ENCODE measurements at regions of chr12 and their contacts with region 1.

Region 1: GRCh38 chr12:57452937-57453509 is 2.1 kb upstream of the INHBE start:
- DNase-seq: peak; percentile 69
- H3K4me3 ChIP-seq: no peak overlapping the region
- H3K27ac ChIP-seq: no peak overlapping the region
- H3K4me1 ChIP-seq: no peaks in the 10 kb centered on the region
- H3K27me3 ChIP-seq: no peaks in the 10 kb centered on the region
- CTCF ChIP-seq: peak; percentile 73 to 94 (median 90)
- POLR2A ChIP-seq: no peak

Region 2: GRCh38 chr12:57166971-57167371 is 286.1 kb before region 1 on chr12:
- intact Hi-C with region 1: no loop called
- DNase-seq: no peak
- H3K4me3 ChIP-seq: no peak overlapping the region
- H3K27ac ChIP-seq: no peak overlapping the region
- H3K4me1 ChIP-seq: no peaks in the 10 kb centered on the region
- H3K27me3 ChIP-seq: no peaks in the 10 kb centered on the region
- CTCF ChIP-seq: no peak
- POLR2A ChIP-seq: no peak

Region 3: GRCh38 chr12:57261428-57261865 is 191.6 kb before region 1 on chr12:
- intact Hi-C with region 1: loop called (anchors 5 kb)
- DNase-seq: no peak
- H3K4me3 ChIP-seq: no peak overlapping the region
- H3K27ac ChIP-seq: no peak overlapping the region
- H3K4me1 ChIP-seq: no peaks in the 10 kb centered on the region
- H3K27me3 ChIP-seq: no peaks in the 10 kb centered on the region
- CTCF ChIP-seq: no peak
- POLR2A ChIP-seq: no peak

Region 4: GRCh38 chr12:57280211-57281062 is 172.6 kb before region 1 on chr12:
- intact Hi-C with region 1: no loop called
- DNase-seq: peak; percentile 56
- H3K4me3 ChIP-seq: no peak overlapping the region
- H3K27ac ChIP-seq: peak overlapping the region; percentile 38 to 82
- H3K4me1 ChIP-seq: peaks cover 12% of the 10 kb centered on the region
- H3K27me3 ChIP-seq: no peaks in the 10 kb centered on the region
- CTCF ChIP-seq: no peak
- POLR2A ChIP-seq: peak; percentile 11

Region 5: DNA sequence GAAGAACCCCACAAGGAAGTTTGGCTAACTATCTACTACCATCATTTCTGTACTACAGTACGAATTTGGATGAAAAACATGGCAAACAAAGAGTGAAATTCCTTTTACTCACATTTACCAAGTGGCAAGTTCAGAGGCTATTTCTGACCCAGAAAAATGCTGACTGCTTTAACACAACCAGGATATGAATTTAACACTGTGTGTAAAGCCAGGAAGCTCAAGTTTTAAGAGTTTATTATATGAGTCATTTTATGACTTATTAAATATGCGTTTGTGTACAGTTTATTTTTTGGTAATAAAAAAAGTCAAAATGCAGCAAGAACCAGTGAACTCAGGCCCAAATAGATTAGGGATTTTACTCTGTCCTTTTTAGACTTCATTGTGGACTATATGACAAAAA is 143.6 kb before region 1 on chr12:
- intact Hi-C with region 1: loop called (anchors 5 kb)
- DNase-seq: no peak
- H3K4me3 ChIP-seq: peak overlapping the region; percentile 12 to 13
- H3K27ac ChIP-seq: peak overlapping the region; percentile 77 to 82
- H3K4me1 ChIP-seq: no peaks in the 10 kb centered on the region
- H3K27me3 ChIP-seq: no peaks in the 10 kb centered on the region
- CTCF ChIP-seq: no peak
- POLR2A ChIP-seq: no peak

Region 6: DNA sequence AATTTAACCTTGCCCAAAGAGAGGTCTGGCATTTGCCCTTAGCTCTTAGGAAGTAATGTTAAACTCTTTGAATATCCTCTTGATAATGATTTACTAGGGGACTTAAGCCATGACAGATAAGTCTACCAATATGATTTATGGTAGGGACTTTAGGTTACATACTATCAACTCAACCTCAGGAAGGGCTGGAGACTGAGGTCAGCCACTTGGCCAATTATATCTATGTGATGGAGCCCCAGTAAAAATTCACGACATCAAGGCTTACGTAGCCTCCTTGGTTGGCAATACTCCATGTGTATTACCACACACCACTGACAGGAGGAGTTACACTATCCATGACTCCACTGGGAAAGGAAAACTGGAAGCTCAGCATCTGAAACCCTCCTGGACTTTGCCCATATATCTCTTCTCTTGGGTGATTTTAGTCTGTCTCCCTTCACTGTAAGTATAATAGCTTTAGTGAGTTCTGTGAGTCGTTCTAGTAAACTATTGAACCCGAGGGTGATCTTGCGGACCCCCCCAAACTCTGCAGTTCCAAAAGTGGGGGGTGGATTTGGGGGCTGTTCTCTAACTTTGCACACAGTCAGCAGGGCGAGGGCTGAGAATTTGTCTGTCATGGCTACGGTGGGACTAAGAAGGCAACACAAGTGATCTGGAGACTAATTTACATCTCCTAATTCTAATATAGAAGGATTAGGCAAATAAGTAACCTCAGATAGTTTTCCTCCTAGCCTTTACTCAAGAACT is 84.5 kb before region 1 on chr12:
- intact Hi-C with region 1: no loop called
- DNase-seq: no peak
- H3K4me3 ChIP-seq: no peak overlapping the region
- H3K27ac ChIP-seq: no peak overlapping the region
- H3K4me1 ChIP-seq: no peaks in the 10 kb centered on the region
- H3K27me3 ChIP-seq: no peaks in the 10 kb centered on the region
- CTCF ChIP-seq: no peak
- POLR2A ChIP-seq: no peak

Region 7: GRCh38 chr12:57535764-57536596 is 83.0 kb after region 1 on chr12:
- intact Hi-C with region 1: no loop called
- DNase-seq: no peak
- H3K4me3 ChIP-seq: no peak overlapping the region
- H3K27ac ChIP-seq: peak overlapping the region in 1 of 2 donors; percentile 4
- H3K4me1 ChIP-seq: no peaks in the 10 kb centered on the region
- H3K27me3 ChIP-seq: no peaks in the 10 kb centered on the region
- CTCF ChIP-seq: no peak
- POLR2A ChIP-seq: no peak